HEK293 (cell line): ENCODE measurements at regions of chr6 and their contacts with region 1.

Region 1: GRCh38 chr6:30717042-30717844 is at the start of gene MDC1:
- H3K4me3 ChIP-seq: peak within 1 kb of the TSS; percentile 72
- H3K27ac ChIP-seq: peak within 1 kb of the TSS; percentile 88
- H3K4me1 ChIP-seq: peaks cover 6% of the 10 kb centered on the region
- CTCF ChIP-seq: peak; percentile 86

Region 2: DNA sequence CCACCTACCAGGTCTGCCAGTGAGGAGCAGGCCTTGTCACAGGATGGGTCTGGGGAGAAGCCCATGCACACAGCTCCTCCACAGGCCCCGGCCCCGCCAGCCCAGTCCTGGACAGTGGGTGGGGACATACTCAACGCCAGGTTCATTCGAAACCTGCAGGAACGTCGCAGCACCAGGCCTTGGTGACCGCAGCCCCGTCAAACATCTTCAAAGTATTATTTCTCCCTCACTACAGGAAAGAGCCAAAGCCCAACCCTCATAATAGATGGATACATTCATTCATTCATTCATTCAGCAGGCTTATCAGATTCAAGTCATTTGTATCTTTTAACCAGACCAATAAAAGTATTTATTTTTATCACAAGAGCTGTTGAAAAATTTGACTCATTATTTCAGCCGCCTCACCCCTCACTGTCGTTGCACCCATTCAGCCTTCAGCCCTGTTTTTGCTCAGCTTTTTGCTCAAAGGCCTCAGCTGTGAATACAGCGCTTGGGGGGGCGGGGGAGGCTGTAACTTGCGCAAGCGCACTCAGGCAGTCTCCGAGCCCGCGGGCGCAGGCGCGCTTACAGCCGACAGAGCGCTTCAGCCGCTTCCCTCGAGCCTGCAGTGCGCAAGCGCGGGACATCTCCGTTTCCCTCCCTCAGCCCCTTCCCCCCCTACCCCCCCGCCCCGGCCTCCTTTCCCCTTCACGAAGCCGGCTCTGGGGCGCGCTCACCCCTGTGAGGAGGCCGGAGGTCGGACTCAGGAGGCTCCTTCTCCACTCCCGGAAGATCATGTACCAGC is 70.6 kb before region 1 on chr6 and contains the start of gene C6orf136:
- CTCF ChIA-PET with region 1: interaction called, 10 read pairs
- POLR2A ChIA-PET with region 1: interaction called, 10 read pairs
- H3K4me3 ChIP-seq: peak within 1 kb of the TSS; percentile 88
- H3K27ac ChIP-seq: peak within 1 kb of the TSS; percentile 96
- H3K4me1 ChIP-seq: peaks cover 8% of the 10 kb centered on the region
- CTCF ChIP-seq: no peak

Region 3: GRCh38 chr6:30672445-30673253 is 44.6 kb before region 1 on chr6 and contains the start of gene DHX16:
- CTCF ChIA-PET with region 1: interaction called, 692 read pairs
- POLR2A ChIA-PET with region 1: interaction called, 22 read pairs
- H3K4me3 ChIP-seq: peak within 1 kb of the TSS; percentile 60
- H3K27ac ChIP-seq: peak within 1 kb of the TSS; percentile 54; the same call in 1 of the 2 replicates
- H3K4me1 ChIP-seq: 0 out of 2 replicates have a peak, but pooled peaks cover 3% of the 10 kb centered on the region
- CTCF ChIP-seq: peak; percentile 81; the same call in 1 of the 2 replicates

Region 4: DNA sequence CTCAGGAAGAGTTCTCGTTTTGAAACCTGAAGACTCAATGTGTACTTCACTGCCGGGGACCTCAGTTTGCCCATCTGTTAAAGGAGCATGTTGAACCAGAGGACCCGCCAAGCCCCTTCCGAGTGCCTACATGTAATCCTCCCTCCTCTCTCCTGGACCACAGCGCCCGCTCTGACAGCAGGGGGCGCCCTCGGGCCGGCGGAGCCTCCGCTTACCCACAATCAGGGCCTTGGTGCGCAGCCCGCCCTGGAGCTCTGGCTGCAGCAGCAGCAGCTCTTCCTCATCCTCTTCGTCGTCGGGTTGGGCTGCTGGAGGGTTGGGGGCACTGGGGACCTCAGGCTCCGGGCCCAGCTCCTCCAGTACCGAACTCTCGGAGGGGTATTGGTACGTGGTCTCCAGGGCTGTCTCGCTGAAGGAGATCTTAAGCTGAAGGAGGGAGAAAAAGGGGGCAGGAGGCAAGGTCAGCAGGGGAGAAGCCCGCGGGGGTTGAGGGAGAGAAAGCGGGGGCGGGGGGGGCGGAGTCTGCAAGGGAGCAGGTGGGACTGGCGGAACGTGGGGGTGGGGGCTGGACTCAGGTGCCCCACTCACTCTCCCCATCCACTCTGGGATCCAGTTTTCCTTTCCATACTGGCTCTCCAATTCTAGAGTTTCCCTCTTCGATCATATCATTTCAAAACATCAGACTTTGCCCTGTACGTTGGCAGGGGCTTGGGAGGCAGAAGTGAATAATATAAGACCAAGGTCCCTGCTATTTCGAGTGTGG is 38.1 kb before region 1 on chr6:
- CTCF ChIA-PET with region 1: interaction called, 692 read pairs
- POLR2A ChIA-PET with region 1: interaction called, 120 read pairs
- H3K4me3 ChIP-seq: no peak overlapping the region
- H3K27ac ChIP-seq: no peak overlapping the region
- H3K4me1 ChIP-seq: peaks cover 19% of the 10 kb centered on the region
- CTCF ChIP-seq: peak; percentile 90

Region 5: GRCh38 chr6:30686908-30687658 is 30.2 kb before region 1 on chr6:
- CTCF ChIA-PET with region 1: interaction called, 692 read pairs
- POLR2A ChIA-PET with region 1: interaction called, 235 read pairs
- H3K4me3 ChIP-seq: peak overlapping the region; percentile 52
- H3K27ac ChIP-seq: peak overlapping the region; percentile 94
- H3K4me1 ChIP-seq: peaks cover 31% of the 10 kb centered on the region
- CTCF ChIP-seq: peak; percentile 4; the same call in 1 of the 2 replicates

Region 6: DNA sequence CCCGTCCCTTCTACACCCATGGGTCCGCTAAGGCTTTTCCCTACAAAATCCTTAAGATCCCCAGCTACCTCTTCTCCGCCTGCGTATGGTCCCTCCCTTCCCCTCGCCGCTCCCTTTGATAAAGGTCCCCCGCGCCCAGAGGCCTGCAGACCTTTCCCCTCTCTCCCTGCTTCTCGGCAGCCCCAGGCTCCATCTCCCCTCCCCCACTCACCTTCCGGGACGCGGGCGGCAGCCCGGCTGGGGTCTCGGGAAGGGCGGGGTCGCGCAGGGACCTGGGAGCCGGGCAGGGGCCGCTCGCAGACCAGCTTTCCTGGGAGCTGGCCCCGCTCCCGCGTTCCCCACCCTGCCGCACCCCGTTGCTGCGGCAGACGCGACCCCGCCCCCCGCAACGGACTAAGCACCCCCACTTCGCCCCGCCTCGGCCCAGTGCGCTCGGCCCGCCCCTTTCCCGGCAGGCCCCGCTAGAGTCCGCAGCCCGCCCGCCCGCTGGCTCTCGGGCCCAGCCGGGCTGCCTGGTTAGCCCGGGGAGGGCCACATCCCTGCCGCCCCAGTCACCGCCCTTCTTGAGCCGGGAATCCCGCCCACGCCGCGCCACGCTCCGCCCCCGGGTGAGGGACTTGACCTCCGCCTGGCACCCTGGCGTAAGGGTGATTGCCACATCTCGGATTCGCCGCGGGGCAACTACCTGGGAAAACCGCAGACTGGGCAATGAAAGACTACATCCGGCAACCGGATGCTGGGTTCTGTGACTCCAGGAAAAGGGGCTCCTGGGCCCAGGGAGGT is 25.3 kb after region 1 on chr6 and contains the start of gene FLOT1:
- CTCF ChIA-PET with region 1: interaction called, 10 read pairs
- POLR2A ChIA-PET with region 1: interaction called, 26 read pairs
- H3K4me3 ChIP-seq: peak within 1 kb of the TSS; percentile 67
- H3K27ac ChIP-seq: peak within 1 kb of the TSS; percentile 94
- H3K4me1 ChIP-seq: no peaks in the 10 kb centered on the region
- CTCF ChIP-seq: no peak

Region 7: GRCh38 chr6:30769088-30769852 is 52.0 kb after region 1 on chr6:
- CTCF ChIA-PET with region 1: interaction called, 5 read pairs
- POLR2A ChIA-PET with region 1: interaction called, 13 read pairs
- H3K4me3 ChIP-seq: peak overlapping the region; percentile 19
- H3K27ac ChIP-seq: peak overlapping the region; percentile 72; the same call in 1 of the 2 replicates
- H3K4me1 ChIP-seq: peaks cover 18% of the 10 kb centered on the region
- CTCF ChIP-seq: no peak

Region 8: GRCh38 chr6:31267651-31268368 is 550.6 kb after region 1 on chr6:
- CTCF ChIA-PET with region 1: no interaction called
- POLR2A ChIA-PET with region 1: no interaction called
- H3K4me3 ChIP-seq: no peak overlapping the region
- H3K27ac ChIP-seq: no peak overlapping the region
- H3K4me1 ChIP-seq: no peaks in the 10 kb centered on the region
- CTCF ChIP-seq: no peak